ENCODE measurements at regions of chr1 and their contacts with region 1.

Region 1: DNA sequence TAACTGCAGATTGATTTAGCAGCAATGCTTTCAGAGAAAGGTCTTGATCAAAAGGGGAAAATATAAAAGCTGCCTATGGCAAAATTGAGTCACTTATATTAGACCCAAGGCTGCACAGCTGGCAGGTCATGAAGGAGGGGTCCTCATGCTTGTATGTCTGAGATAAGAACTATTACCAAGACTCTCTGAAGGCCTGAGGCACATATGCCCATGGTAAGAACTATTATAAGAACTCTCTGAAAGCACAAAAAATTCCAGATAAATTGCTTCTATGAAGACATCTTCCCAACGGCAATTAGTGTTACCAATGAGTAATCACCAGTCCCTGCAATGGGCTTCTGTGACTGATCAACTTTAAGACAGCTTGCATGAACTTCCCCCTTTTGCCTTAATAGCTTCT is 42.8 kb upstream of the LRIF1 start:
- DNase-seq: no peak
- H3K4me3 ChIP-seq: no peak overlapping the region
- H3K27ac ChIP-seq: no peak overlapping the region
- H3K4me1 ChIP-seq: no peaks in the 10 kb centered on the region
- H3K27me3 ChIP-seq: no peaks in the 10 kb centered on the region
- CTCF ChIP-seq: no peak

Region 2: DNA sequence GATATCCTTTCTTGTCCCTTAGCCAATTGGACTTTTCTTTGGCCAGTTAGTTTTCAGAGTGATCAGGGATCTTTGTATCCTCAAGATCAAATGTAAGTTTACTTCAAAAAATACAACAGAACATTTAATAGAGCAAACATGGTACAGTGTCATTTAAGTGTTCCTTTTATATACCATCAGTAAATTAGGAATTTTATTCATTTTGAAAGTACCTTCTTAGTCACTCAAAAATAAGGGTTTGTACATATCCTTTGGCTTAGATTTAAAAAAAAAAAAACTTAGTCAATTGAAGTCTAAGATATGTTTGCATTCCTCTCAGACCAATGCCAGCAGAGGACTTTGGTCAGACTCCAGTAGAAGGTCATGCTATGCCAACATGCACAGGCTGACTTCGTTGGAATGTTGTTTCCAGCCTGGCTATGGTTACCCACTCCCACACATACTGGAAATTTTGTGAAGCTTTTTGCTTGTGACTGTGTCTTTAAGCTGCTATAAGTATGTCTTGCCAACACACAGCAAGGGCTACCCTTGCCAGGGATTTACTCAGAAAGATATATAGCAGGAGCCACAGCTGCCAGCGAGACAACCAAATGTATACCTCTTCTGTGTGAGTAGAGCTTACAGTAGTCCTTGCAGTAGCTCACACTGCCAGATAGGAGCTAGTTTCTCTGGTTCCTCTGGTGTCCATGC is 38.6 kb after region 1 on chr1:
- CTCF ChIA-PET with region 1: no interaction called
- POLR2A ChIA-PET with region 1: no interaction called
- intact Hi-C with region 1: loop called (anchors 5 kb)
- DNase-seq: no peak
- H3K4me3 ChIP-seq: no peak overlapping the region
- H3K27ac ChIP-seq: no peak overlapping the region
- H3K4me1 ChIP-seq: no peaks in the 10 kb centered on the region
- H3K27me3 ChIP-seq: no peaks in the 10 kb centered on the region
- CTCF ChIP-seq: no peak

Region 3: GRCh38 chr1:111290630-111291029 is 284.1 kb after region 1 on chr1 and contains the start of gene CHIA:
- CTCF ChIA-PET with region 1: no interaction called
- POLR2A ChIA-PET with region 1: no interaction called
- intact Hi-C with region 1: no loop called
- DNase-seq: no peak
- H3K4me3 ChIP-seq: no peak within 1 kb of the TSS
- H3K27ac ChIP-seq: no peak within 1 kb of the TSS
- H3K4me1 ChIP-seq: no peaks in the 10 kb centered on the region
- H3K27me3 ChIP-seq: peaks cover 57% of the 10 kb centered on the region
- CTCF ChIP-seq: no peak
- total RNA-seq, gene CHIA: not detected in 2 replicates